Body of pancreas (tissue), 4 donors: ENCODE measurements at regions of chr12 and their contacts with region 1.

Region 1: DNA sequence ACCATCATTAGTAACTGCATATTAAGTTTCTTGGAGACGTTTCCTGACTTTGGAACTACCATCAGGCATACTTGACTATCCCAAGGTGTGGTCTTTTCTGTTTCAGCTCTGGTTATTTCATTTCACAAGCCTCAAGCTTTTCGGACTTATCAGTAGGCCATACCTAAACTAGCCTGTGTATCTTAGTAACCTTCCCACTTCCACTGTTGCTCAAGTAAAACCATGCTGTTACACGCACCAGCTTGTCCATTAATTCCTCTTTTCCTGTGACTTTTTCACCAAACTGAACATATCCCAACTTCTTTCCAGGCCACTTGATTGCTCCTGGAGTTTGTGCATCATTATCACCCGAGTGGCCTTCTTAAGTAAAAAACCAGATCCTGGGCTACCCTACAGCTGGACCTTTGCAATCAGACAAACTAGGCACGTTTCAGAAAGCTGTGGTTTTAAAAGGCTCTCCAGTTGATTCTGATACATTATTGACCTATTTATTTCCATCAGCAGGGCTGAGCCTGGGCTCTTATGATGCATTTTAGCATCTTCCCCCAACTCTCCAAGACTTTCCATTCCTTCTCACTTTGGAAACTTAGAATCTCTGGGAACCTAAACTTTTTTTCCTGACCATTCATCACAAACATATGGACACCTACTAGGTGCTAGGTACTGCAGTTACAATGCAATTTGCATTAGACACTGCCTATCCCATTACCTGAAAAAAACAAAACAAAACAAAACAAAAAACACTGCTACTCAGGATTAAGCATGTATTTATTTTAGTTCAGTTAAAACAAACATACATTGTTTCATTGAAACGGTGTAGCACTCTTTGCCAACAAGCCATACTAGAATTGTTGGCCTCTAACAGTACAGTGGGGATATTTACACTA is 14.9 kb downstream of the SLC38A2 start:
- DNase-seq: no peak
- ATAC-seq: peak; percentile 21
- H3K4me3 ChIP-seq: no peak overlapping the region
- H3K27ac ChIP-seq: peak overlapping the region in 1 of 4 donors; percentile 35
- H3K4me1 ChIP-seq: peaks cover 37% of the 10 kb centered on the region
- H3K27me3 ChIP-seq: no peaks in the 10 kb centered on the region
- CTCF ChIP-seq: no peak
- POLR2A ChIP-seq: peak in 2 of 3 donors; percentile 1 to 10

Region 2: GRCh38 chr12:45907955-45908354 is 449.7 kb before region 1 on chr12:
- intact Hi-C with region 1: no loop called
- DNase-seq: no peak
- ATAC-seq: no peak
- H3K4me3 ChIP-seq: no peak overlapping the region
- H3K27ac ChIP-seq: no peak overlapping the region
- H3K4me1 ChIP-seq: peaks cover 17% of the 10 kb centered on the region
- H3K27me3 ChIP-seq: no peaks in the 10 kb centered on the region
- CTCF ChIP-seq: no peak
- POLR2A ChIP-seq: no peak

Region 3: GRCh38 chr12:46659824-46660223 is 302.1 kb after region 1 on chr12:
- intact Hi-C with region 1: loop called (anchors 10 kb)
- DNase-seq: no peak
- ATAC-seq: no peak
- H3K4me3 ChIP-seq: no peak overlapping the region
- H3K27ac ChIP-seq: no peak overlapping the region
- H3K4me1 ChIP-seq: peaks cover 9% of the 10 kb centered on the region
- H3K27me3 ChIP-seq: no peaks in the 10 kb centered on the region
- CTCF ChIP-seq: no peak
- POLR2A ChIP-seq: no peak